Mammary epithelial cell (primary cell): ENCODE measurements at regions of chr9 and their contacts with region 1.

Region 1: GRCh38 chr9:128771745-128772519 is at the start of gene ZER1:
- DNase-seq: peak; percentile 86
- H3K4me3 ChIP-seq: peak within 1 kb of the TSS; percentile 56 to 81 (median 67)
- H3K27ac ChIP-seq: peak within 1 kb of the TSS; percentile 79
- H3K4me1 ChIP-seq: peaks cover 5% of the 10 kb centered on the region
- H3K27me3 ChIP-seq: no peaks in the 10 kb centered on the region
- CTCF ChIP-seq: no peak
- total RNA-seq, gene ZER1: 27.3 to 29.2 TPM

Region 2: GRCh38 chr9:128688512-128689292 is 83.2 kb before region 1 on chr9 and contains the start of gene SET:
- CTCF ChIA-PET with region 1: no interaction called
- dilution Hi-C with region 1: no loop called
- in situ Hi-C with region 1: no loop called
- intact Hi-C with region 1: loop called (anchors 5 kb)
- DNase-seq: peak; percentile 90
- H3K4me3 ChIP-seq: peak within 1 kb of the TSS; percentile 79 to 92 (median 81)
- H3K27ac ChIP-seq: peak within 1 kb of the TSS; percentile 58
- H3K4me1 ChIP-seq: peaks cover 35% of the 10 kb centered on the region
- H3K27me3 ChIP-seq: no peaks in the 10 kb centered on the region
- CTCF ChIP-seq: no peak
- total RNA-seq, gene SET: 282 to 484 TPM

Region 3: DNA sequence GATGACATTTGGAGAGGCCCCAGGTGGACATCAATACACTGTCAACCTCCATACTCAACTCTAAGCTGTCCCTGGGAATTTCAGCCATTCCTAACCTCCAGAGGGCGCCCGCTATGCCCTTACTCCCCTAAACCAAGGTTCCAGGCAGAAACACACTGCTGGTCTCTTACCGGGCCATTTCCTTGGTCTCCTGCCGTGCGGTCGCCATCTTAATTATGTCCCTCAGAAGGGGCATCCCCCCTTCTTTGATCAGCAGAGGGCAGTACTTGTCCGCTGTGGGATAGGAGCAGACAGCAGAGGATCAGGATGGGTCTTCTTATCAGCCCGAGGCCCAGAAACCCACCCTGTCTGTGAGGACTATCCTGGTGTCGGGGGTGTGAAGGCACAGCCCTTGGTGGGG is 38.7 kb before region 1 on chr9:
- CTCF ChIA-PET with region 1: no interaction called
- dilution Hi-C with region 1: no loop called
- in situ Hi-C with region 1: no loop called
- intact Hi-C with region 1: loop called (anchors 2 kb)
- DNase-seq: peak; percentile 68
- H3K4me3 ChIP-seq: no peak overlapping the region
- H3K27ac ChIP-seq: no peak overlapping the region
- H3K4me1 ChIP-seq: no peaks in the 10 kb centered on the region
- H3K27me3 ChIP-seq: no peaks in the 10 kb centered on the region
- CTCF ChIP-seq: peak; percentile 74 to 82

Region 4: GRCh38 chr9:128786681-128787601 is 15.0 kb after region 1 on chr9 and contains the start of gene TBC1D13:
- CTCF ChIA-PET with region 1: no interaction called
- dilution Hi-C with region 1: no loop called
- in situ Hi-C with region 1: no loop called
- intact Hi-C with region 1: loop called (anchors 1 kb)
- DNase-seq: peak; percentile 77
- H3K4me3 ChIP-seq: peak within 1 kb of the TSS; percentile 78 to 100 (median 96)
- H3K27ac ChIP-seq: peak within 1 kb of the TSS; percentile 11
- H3K4me1 ChIP-seq: peaks cover 6% of the 10 kb centered on the region
- H3K27me3 ChIP-seq: no peaks in the 10 kb centered on the region
- CTCF ChIP-seq: no peak
- total RNA-seq, gene TBC1D13: 18.0 to 18.5 TPM

Region 5: DNA sequence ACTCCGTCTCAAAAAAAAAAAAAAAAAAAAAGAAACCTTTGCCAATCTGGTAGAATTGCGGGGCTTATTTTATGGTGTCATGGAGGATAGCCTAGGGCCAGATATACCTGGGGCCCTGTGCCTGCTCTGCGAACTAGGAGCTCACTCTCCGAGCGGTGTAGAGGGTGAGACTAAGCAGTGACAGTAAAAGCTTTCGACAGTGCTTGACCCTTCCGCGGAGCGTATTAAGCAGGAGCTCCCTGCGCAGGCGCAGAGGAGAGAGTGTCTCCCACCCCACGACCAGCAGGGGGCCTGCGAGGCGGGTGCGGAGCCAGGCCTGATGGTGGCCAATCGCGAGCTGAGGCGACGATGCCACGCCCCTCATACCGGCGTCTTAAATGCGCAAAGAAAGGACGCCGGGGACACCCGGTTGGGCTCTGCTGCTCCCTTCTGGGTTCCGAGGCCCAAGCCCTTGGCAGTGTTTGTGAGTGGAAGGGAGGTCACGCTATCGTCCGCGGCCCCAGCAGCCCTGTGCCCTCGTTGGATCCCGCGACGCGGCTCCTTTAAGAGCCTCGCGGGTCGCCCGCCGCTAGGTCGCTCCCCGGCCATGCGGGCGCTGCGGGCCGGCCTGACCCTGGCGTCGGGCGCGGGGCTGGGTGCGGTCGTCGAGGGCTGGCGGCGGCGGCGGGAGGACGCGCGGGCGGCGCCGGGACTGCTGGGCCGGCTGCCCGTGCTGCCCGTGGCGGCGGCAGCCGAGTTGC is 46.3 kb after region 1 on chr9 and contains the start of gene ENDOG:
- CTCF ChIA-PET with region 1: no interaction called
- dilution Hi-C with region 1: no loop called
- in situ Hi-C with region 1: no loop called
- intact Hi-C with region 1: loop called (anchors 2 kb)
- DNase-seq: peak; percentile 93
- H3K4me3 ChIP-seq: peak within 1 kb of the TSS; percentile 75 to 80 (median 76)
- H3K27ac ChIP-seq: peak within 1 kb of the TSS; percentile 41
- H3K4me1 ChIP-seq: peaks cover 16% of the 10 kb centered on the region
- H3K27me3 ChIP-seq: no peaks in the 10 kb centered on the region
- CTCF ChIP-seq: peak; percentile 96 to 99
- total RNA-seq, gene ENDOG: 30.8 to 40.3 TPM